ENCODE measurements at regions of chr11 and their contacts with region 1.

Region 1: GRCh38 chr11:93652161-93652597 is 9.3 kb upstream of the CEP295 start:
- DNase-seq: peak; percentile 17
- H3K4me3 Mint-ChIP-seq: no peak overlapping the region
- H3K27ac Mint-ChIP-seq: no peak overlapping the region
- H3K4me1 Mint-ChIP-seq: peaks cover 3% of the 10 kb centered on the region
- H3K27me3 Mint-ChIP-seq: no peaks in the 10 kb centered on the region

Region 2: GRCh38 chr11:93234602-93235207 is 417.5 kb before region 1 on chr11:
- CTCF ChIA-PET with region 1: interaction called, 55 read pairs
- intact Hi-C with region 1: loop called (anchors 1 kb)
- DNase-seq: peak; percentile 84
- H3K4me3 Mint-ChIP-seq: no peak overlapping the region
- H3K27ac Mint-ChIP-seq: no peak overlapping the region
- H3K4me1 Mint-ChIP-seq: no peaks in the 10 kb centered on the region
- H3K27me3 Mint-ChIP-seq: peaks cover 21% of the 10 kb centered on the region

Region 3: GRCh38 chr11:93330446-93330984 is 321.7 kb before region 1 on chr11 and contains the start of gene DEUP1:
- CTCF ChIA-PET with region 1: no interaction called
- intact Hi-C with region 1: loop called (anchors 10 kb)
- DNase-seq: peak; percentile 31
- H3K4me3 Mint-ChIP-seq: peak within 1 kb of the TSS; percentile 61
- H3K27ac Mint-ChIP-seq: no peak within 1 kb of the TSS
- H3K4me1 Mint-ChIP-seq: peaks cover 7% of the 10 kb centered on the region
- H3K27me3 Mint-ChIP-seq: peaks cover 33% of the 10 kb centered on the region
- total RNA-seq, gene DEUP1: not detected

Region 4: DNA sequence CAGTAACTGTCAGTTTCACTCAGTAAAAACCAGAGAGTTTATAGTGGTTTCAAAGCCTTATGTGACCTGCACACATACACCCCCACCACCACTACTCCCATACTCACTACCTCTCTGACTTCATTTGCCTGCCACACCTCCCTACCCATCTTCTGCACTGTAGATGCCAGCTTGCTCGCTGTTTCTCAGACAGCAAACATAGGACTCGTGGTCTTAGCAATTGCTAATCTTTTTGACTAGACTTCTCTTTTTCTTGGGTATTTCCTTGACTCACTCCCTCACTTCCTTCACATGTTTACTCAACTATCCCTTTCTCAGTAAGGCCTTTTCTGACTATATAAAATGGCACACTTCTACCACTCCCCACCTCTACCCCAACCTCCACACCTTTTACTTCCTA is 37.1 kb after region 1 on chr11:
- CTCF ChIA-PET with region 1: no interaction called
- intact Hi-C with region 1: no loop called
- DNase-seq: peak; percentile 33
- H3K4me3 Mint-ChIP-seq: no peak overlapping the region
- H3K27ac Mint-ChIP-seq: peak overlapping the region; percentile 63
- H3K4me1 Mint-ChIP-seq: peaks cover 17% of the 10 kb centered on the region
- H3K27me3 Mint-ChIP-seq: no peaks in the 10 kb centered on the region